GM13977 (cell line): ENCODE measurements at regions of chr1 and their contacts with region 1.

Region 1: DNA sequence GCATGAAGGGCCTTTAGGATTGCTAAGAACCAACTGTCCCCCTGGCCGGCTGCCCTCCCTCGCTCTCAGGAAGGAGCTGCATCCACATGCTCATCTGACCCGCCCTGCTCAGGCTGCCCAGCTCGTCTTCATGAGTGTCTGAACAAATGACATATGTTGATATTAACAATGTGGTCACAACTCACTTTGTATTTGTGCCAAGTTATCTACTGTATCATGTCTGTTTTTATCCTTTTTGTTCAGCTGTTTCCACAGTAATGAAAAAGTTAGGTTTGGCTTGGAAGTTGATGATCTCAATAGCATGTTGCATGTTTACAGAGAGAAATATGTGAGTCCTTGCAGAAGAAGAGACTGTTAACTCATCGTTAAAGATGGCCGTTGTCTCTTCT is 75.1 kb downstream of the PHTF1 start:
- DNase-seq: no peak
- CTCF ChIP-seq: no peak

Region 2: GRCh38 chr1:113133038-113133437 is 551.1 kb before region 1 on chr1:
- in situ Hi-C with region 1: loop called (anchors 10 kb)
- DNase-seq: no peak
- CTCF ChIP-seq: no peak